ENCODE measurements at regions of chr1 and their contacts with region 1.

Region 1: GRCh38 chr1:15430787-15431570 is 7.3 kb upstream of the CTRC start:
- DNase-seq: peak; percentile 89
- CTCF ChIP-seq: peak; percentile 94

Region 2: DNA sequence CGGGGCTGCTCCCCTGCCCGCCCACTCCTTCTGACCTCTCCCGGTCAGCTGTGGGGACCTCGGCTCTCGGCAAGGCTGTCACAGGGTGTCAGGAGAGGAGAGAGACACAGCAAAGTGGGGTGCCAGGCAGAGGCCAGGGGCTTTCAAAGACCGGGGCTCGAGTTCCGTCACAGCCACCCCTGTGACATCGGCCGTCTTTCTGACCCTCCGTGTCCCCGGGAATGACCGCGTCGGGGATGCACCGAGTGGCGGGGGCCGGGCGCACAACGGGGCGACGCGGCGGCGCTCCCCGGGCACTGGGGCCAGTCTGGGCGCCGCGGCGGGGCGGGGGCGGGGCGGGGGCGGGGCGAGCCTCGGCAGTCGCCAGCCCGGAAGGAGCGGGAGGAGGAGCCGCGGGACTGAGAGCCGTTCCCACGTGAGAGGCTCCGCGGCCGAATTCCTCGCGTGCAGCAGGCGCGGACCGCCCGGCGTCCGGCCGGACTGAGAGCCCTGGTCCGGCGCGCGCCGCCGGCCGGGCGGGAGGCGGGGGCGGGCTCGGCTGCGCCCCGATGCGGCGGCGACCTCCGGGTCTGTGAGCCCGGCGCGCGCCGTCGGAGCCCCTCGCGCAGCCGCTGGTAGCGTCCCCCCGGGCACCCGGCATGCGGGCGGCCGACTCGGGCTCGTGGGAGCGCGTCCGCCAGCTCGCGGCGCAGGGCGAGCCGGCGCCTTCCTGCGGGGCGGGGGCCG is 507.1 kb before region 1 on chr1:
- CTCF ChIA-PET with region 1: no interaction called
- POLR2A ChIA-PET with region 1: no interaction called
- DNase-seq: peak; percentile 74
- CTCF ChIP-seq: no peak

Region 3: DNA sequence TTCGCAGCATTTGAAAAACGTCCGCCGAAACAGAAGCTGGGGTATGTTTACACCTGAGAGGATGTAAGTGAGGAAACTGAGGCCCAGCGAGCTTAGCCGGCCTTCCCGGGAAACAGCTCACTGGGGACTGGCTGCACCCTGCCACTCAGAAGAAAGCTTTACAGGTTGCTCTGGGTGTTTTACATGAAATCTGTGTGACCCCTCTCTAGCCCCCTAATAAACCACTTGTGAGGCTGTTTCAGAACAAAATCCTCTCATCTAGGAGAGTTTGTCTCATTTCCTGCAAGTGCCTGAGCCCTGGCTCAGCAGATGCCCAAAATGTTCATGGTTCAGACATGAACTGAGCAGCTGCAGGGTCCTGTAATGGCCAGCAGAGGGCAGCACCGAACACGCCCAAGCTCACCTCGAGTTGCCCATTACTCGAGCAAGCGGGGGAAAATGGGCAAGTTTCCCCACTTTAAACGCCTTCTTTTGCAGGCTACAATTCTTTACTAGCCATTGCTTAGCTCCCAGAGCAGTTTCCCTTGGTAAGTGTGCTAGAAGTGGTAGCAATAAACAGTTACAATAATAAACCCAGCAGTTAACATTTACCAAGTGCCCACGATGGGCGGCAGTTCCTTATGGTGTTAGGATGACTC is 107.5 kb before region 1 on chr1:
- CTCF ChIA-PET with region 1: interaction called, 151 read pairs
- POLR2A ChIA-PET with region 1: no interaction called
- DNase-seq: peak; percentile 82
- CTCF ChIP-seq: peak; percentile 98

Region 4: DNA sequence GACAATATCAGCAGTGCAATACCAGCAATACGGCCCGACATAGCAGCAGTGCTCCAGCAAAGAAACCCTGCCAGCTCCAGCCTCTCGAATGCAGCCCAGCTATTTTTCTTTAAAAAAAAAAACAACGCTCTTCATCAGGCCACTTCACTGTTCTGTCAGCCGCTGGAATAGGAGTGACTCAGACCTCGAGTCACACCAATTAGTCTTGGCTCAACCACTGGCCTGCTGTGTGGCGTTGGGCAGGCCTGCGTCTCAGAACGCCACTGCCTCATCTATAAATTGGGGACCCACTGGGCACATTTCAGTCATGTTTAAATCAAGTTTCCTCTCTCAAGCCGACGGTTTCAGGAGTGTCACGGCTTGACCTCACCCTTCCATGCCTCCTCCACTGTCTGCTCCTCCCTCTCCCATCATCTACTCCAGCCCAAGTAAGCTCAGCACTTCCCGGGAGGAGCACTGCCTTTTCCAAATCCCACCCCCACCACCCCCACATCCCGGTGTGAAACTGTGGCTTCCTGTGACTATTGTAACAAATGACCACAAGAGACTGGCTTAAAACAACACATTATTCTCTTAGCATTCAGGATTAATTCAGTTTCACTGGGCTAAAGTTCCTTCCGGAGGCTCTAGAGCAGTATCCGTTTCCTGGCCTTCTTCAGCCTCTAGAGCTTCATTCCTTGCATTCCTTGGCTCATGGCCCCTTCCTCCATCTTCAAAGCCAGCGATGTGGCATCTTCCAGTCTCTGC is 93.2 kb before region 1 on chr1:
- CTCF ChIA-PET with region 1: interaction called, 10 read pairs
- POLR2A ChIA-PET with region 1: no interaction called
- DNase-seq: no peak
- CTCF ChIP-seq: no peak

Region 5: DNA sequence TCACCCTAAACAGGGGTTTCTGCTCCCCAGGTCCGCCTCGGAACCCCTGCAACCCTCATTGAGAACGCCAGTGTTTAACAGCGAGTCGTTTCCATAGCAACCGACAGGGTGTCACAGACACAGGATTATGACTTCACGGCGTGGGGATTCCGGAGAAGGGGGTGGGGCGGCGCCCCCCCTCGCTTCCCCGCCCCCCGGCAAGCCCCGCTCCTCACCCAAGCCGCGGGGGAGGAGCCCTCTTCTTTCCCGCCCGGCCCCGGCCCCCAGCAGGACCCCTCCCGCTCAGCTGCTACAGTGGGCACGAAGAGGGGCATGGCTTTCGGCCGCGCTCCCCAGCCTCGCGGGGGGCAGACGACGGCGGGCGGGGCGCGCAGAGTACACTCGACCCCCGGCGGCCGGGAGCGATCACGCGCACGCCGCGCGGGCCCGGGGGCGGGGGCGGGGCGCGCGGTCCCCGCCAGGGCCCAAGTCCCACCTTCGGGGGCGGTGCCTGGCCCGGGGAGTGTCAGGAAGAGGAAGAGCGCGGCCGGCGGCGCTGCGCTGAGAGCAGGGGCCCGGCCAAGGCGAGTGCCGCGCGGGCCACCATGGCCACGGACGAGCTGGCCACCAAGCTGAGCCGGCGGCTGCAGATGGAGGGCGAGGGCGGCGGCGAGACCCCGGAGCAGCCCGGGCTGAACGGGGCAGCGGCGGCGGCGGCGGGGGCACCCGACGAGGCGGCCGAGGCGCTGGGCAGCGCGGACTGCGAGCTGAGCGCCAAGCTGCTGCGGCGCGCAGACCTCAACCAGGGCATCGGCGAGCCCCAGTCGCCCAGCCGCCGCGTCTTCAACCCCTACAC is 21.4 kb before region 1 on chr1 and contains the start of gene EFHD2:
- CTCF ChIA-PET with region 1: interaction called, 18 read pairs
- POLR2A ChIA-PET with region 1: no interaction called
- DNase-seq: peak; percentile 93
- CTCF ChIP-seq: no peak

Region 6: DNA sequence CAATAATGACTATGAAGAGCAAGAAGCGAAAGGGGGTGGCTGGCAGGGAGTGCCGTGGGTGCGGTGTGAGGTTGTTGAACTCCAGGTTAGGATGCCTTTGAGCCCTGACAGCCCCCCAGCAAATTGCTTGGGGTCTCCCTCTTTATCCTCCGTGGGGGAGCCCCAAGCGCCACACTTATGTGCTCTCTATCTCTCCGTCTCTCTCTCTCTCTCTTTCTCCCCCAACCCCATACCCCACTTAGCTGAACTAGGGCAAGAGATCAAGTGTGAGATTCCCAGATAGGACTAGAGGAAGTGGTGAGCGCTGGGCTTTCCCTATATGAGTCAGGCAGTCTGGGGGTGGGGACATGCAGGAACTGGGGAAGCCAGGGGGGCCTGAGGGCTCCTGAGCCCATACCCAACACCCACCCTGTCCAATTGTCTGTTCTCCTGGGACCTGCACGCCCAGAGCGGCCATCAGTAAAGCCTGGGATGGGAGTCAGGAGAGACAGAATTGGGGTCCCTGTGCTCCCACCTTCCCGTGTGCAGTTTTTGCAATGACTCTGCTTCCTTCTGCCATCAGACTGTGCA is 13.5 kb before region 1 on chr1:
- CTCF ChIA-PET with region 1: interaction called, 50 read pairs
- POLR2A ChIA-PET with region 1: no interaction called
- DNase-seq: peak; percentile 46
- CTCF ChIP-seq: no peak

Region 7: GRCh38 chr1:15444468-15445389 is 13.8 kb after region 1 on chr1:
- CTCF ChIA-PET with region 1: interaction called, 16 read pairs
- POLR2A ChIA-PET with region 1: no interaction called
- DNase-seq: no peak
- CTCF ChIP-seq: no peak